ENCODE measurements at regions of chr6 and their contacts with region 1.

Region 1: GRCh38 chr6:139375232-139376016 is 976 bp upstream of the CITED2 start:
- DNase-seq: peak; percentile 90 to 95 (median 91)
- ATAC-seq: peak; percentile 70 to 82 (median 80)
- H3K4me3 ChIP-seq: peak overlapping the region; percentile 78 to 98 (median 92)
- H3K27ac ChIP-seq: peak overlapping the region; percentile 95 to 100 (median 98)
- H3K4me1 ChIP-seq: peaks cover 0 to 30% (median 15%) of the 10 kb centered on the region in 12 donors
- H3K27me3 ChIP-seq: no peaks in the 10 kb centered on the region
- CTCF ChIP-seq: peak in 1 of 12 donors; percentile 14
- POLR2A ChIP-seq: peak in 1 of 2 donors; percentile 64

Region 2: DNA sequence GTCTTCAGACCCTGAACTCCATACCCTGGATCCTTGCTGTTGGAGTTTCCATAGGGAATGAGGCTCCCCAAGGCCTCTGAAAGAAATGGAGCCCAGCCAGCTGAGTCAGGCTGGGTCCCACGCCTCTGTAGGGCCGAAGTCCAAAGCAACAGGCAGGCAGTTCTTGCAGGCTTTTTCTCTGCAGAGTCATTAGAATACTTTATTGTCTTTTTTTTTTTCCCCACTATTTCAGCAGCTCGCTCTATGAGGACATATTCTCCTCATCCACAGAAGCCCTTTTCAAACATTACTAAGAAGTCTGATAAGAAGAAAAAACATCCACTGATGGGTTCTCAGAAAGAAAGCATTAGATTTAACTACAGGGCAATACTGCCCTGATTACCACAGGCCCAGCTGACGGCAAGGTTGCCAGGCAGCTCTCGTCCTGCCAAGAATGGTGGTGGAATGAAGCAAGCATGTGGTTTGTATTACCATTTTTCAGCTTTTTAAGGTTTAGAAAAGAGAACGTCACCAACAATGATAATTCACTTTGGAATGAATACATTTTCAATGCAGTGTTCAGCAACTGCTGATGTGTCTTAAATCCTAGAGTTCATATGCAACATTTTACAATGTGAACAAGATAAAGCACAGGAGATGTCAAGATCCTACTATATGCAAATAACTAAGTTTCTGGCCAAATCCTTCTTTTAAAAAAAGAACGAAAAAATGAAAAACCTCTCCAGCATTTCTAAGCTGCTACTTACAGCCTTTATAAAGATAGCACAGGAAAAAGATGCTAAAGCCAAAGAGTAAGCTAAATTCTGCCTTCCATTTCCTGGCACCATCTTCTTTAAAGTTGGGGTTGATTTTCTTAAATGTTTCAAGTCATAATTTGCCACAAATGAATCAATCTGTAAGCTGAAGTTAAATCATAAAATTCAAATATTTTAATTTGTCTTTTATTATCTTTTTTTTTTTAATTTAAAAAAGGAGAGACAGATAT is 222.6 kb after region 1 on chr6:
- intact Hi-C with region 1: loop called in 4 of 10 experiments (anchors 10 kb)
- DNase-seq: peak in 4 of 5 donors; percentile 55 to 72 (median 60)
- ATAC-seq: peak; percentile 72 to 93 (median 84)
- H3K4me3 ChIP-seq: no peak overlapping the region
- H3K27ac ChIP-seq: peak overlapping the region in 11 of 12 donors; percentile 8 to 70 (median 48)
- H3K4me1 ChIP-seq: peaks cover 0 to 24% (median 15%) of the 10 kb centered on the region in 12 donors
- H3K27me3 ChIP-seq: no peaks in the 10 kb centered on the region
- CTCF ChIP-seq: no peak
- POLR2A ChIP-seq: no peak

Region 3: GRCh38 chr6:139881728-139882211 is 506.3 kb after region 1 on chr6:
- intact Hi-C with region 1: loop called in 8 of 10 experiments (anchors 5 to 10 kb)
- DNase-seq: no peak
- ATAC-seq: peak; percentile 68 to 77 (median 72)
- H3K4me3 ChIP-seq: peak overlapping the region in 1 of 12 donors; percentile 4
- H3K27ac ChIP-seq: peak overlapping the region in 11 of 12 donors; percentile 55 to 87 (median 73)
- H3K4me1 ChIP-seq: peaks cover 3 to 36% (median 18%) of the 10 kb centered on the region in 12 donors
- H3K27me3 ChIP-seq: no peaks in the 10 kb centered on the region
- CTCF ChIP-seq: peak; percentile 38 to 67 (median 59)
- POLR2A ChIP-seq: no peak

Region 4: DNA sequence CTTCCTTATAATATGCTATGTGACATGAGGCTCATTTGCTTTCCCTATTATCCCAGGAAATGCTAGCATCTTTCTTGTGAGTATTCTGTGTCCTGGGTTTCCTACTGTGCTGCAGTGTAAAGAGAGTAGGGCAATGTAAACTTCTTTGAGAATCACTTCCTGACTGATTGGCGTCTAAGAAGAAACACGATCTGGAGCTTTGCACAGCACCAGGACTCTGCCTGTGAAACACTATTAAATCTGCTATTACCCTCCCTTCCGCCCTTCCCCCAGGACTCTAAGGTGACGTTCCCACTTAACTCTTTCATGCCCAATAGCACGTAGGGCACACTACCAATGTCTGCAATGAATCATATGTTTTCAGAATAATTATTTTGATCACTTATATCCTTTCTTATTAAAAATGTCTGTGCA is 606.4 kb after region 1 on chr6:
- intact Hi-C with region 1: loop called in 4 of 10 experiments (anchors 5 to 10 kb)
- DNase-seq: peak in 2 of 5 donors; percentile 22 to 26
- ATAC-seq: peak; percentile 38 to 71 (median 60)
- H3K4me3 ChIP-seq: no peak overlapping the region
- H3K27ac ChIP-seq: peak overlapping the region in 11 of 12 donors; percentile 1 to 71 (median 50)
- H3K4me1 ChIP-seq: peaks cover 0 to 61% (median 33%) of the 10 kb centered on the region in 12 donors
- H3K27me3 ChIP-seq: no peaks in the 10 kb centered on the region
- CTCF ChIP-seq: no peak
- POLR2A ChIP-seq: no peak

Region 5: DNA sequence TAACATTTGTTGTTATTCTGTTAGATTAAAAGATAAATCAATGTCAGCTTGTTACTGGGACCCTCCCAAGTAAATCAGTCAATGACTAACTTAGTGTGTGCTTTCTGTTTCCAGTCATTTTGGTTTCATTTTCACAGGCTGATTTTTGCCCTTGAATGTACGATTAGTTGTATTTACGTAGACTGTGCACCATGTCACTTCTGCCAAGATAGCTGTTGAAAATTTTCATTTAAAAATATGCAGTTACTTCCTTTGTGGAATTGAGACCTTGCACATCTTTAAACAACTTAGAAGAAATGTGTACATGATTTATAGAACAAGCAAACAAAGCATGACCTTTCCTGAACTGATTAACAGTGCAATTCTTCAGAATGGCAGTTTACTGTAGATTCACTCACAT is 943.8 kb after region 1 on chr6:
- intact Hi-C with region 1: loop called in 1 of 10 experiments (anchors 5 kb)
- DNase-seq: no peak
- ATAC-seq: peak in 2 of 4 donors; percentile 40
- H3K4me3 ChIP-seq: peak overlapping the region in 10 of 12 donors; percentile 1 to 30 (median 12)
- H3K27ac ChIP-seq: peak overlapping the region in 7 of 12 donors; percentile 10 to 86 (median 57)
- H3K4me1 ChIP-seq: peaks cover 7 to 41% (median 34%) of the 10 kb centered on the region in 12 donors
- H3K27me3 ChIP-seq: no peaks in the 10 kb centered on the region
- CTCF ChIP-seq: no peak
- POLR2A ChIP-seq: no peak

Region 6: DNA sequence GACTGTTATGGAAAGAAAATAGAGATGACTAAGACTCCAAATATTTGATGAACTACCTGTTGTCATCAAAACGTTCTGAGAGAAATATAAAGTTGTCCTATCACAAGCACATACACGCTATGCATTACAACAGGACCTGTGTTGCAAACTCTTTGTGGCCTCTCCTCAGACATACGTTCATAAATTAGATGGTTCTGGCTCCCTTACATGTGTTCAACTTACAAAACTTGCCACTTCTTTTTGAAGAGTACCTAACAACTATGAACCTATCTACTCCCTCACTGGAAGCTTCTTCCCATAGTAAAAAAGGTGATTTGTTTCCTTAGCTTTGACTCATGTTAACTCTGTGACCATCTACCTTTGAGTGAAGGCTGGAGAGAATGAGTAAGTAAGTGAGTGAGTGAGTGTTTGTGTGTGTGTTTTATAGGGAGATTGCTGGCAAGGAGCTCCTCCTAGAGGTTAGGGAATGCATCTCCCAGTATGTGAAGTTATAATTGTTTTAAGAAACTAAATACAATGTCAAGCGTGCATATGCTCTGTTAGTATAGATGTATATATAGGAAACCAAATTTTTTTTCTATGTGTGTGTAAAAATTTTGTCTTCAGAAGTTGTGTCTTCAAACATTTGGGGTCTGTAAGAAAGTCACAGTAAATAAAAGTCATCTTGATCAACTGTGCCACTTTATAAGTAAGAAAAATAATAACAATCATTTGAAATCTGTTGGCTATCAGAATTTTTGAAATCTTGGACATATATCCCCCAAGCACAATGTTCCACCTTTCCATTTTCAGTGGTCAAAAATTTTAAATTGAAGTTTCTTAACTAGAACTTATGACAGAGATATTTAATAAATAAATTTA is 1546.2 kb after region 1 on chr6:
- intact Hi-C with region 1: loop called in 6 of 10 experiments (anchors 5 to 10 kb)
- DNase-seq: peak in 1 of 5 donors; percentile 21
- ATAC-seq: peak in 3 of 4 donors; percentile 74 to 78 (median 78)
- H3K4me3 ChIP-seq: no peak overlapping the region
- H3K27ac ChIP-seq: no peak overlapping the region
- H3K4me1 ChIP-seq: no peaks in the 10 kb centered on the region
- H3K27me3 ChIP-seq: no peaks in the 10 kb centered on the region
- CTCF ChIP-seq: peak in 11 of 12 donors; percentile 41 to 74 (median 57)
- POLR2A ChIP-seq: no peak

Measured in heart left ventricle (tissue), 16 donors.